Astrocyte of the cerebellum (primary cell): ENCODE measurements at regions of chr13 and their contacts with region 1.

Region 1: DNA sequence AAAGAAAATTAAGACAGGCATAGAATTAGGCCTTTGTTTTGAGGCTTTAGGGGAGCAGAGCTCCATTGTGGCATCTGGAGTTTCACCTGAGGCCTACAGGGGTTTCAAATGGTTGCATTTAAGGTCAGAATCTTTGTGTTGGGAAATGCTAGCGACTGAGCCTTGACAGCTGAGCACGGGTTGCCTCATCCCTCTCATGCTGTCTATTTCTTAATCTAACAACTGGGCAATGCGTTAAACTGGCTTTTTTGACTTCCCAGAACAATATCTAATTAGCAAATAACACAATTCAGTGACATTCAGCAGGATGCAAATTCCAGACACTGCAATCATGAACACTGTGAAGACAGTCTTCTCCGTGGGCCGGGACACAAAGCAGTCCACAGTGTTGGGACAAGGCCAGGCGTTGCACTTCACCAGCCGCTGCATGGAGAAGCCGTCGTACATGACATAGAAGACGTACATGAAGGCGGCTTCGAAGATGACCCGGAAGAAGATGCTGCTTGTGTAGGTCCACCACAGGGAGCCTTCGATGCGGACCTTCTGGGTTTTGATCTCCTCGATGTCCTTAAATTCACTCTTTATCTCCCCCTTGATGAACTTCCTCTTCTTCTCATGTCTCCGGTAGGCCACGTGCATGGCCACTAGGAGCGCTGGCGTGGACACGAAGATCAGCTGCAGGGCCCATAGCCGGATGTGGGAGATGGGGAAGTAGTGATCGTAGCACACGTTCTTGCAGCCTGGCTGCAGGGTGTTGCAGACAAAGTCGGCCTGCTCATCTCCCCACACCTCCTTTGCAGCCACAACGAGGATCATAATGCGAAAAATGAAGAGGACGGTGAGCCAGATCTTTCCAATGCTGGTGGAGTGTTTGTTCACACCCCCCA is 3.8 kb downstream of the GJB2 start:
- DNase-seq: no peak
- H3K4me3 ChIP-seq: no peak overlapping the region
- CTCF ChIP-seq: peak; percentile 11

Region 2: GRCh38 chr13:20254076-20254475 is 65.2 kb after region 1 on chr13:
- in situ Hi-C with region 1: loop called (anchors 5 kb)
- DNase-seq: no peak
- H3K4me3 ChIP-seq: no peak overlapping the region
- CTCF ChIP-seq: no peak